ENCODE measurements at regions of chr1 and their contacts with region 1.

Region 1: GRCh38 chr1:208024406-208024805 is 113.5 kb upstream of the CD34 start:
- DNase-seq: no peak
- H3K4me3 ChIP-seq: no peak overlapping the region
- H3K27ac ChIP-seq: no peak overlapping the region
- H3K4me1 ChIP-seq: 0 out of 7 replicates have a peak, but pooled peaks cover 0 to 2% (median 0%) of the 10 kb centered on the region in 4 experiments
- H3K27me3 ChIP-seq: no peaks in the 10 kb centered on the region
- CTCF ChIP-seq: no peak
- EP300 ChIP-seq: no peak
- POLR2A ChIP-seq: no peak
- RAD21 ChIP-seq: no peak

Region 2: GRCh38 chr1:208047476-208047934 is 23.1 kb after region 1 on chr1:
- CTCF ChIA-PET with region 1: interaction called, 78 read pairs
- POLR2A ChIA-PET with region 1: no interaction called
- DNase-seq: no peak
- H3K4me3 ChIP-seq: no peak overlapping the region
- H3K27ac ChIP-seq: no peak overlapping the region
- H3K4me1 ChIP-seq: peaks cover 0 to 5% (median 0%) of the 10 kb centered on the region in 4 experiments; a peak in 1 of 7 replicates
- H3K27me3 ChIP-seq: no peaks in the 10 kb centered on the region
- CTCF ChIP-seq: no peak
- EP300 ChIP-seq: no peak
- POLR2A ChIP-seq: no peak
- RAD21 ChIP-seq: no peak

Region 3: DNA sequence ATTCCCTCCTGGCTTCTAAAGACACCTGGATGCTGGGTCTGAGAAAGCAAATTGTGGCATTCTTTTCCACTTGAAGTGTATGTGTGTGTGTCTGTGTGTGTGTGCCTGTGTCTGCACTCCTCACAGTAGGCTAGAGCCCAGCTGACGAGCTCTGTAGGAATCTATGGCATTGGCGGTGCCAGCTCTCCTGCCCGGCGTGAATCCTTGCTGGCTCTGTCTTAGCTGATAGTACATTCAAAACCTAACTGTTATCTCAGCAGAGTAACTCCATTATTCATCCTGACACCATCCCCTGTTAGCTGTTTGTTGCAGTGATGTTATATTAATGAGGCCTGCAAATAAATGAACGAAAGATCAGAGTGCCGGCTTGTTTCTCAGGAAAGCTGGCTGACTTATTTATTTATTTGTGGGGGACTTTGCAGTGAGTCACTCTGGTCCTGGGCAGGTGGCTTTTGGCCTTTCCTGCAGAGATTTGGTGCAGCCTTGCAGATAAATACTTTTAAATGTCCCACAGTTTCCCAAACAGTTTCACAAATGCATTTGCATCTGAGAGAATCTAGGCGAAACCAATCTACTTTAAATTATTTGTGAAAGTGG is 47.1 kb after region 1 on chr1:
- CTCF ChIA-PET with region 1: interaction called, 48 read pairs
- POLR2A ChIA-PET with region 1: no interaction called
- DNase-seq: no peak
- H3K4me3 ChIP-seq: no peak overlapping the region
- H3K27ac ChIP-seq: no peak overlapping the region
- H3K4me1 ChIP-seq: no peaks in the 10 kb centered on the region; a peak in 1 of 7 replicates
- H3K27me3 ChIP-seq: no peaks in the 10 kb centered on the region
- CTCF ChIP-seq: no peak
- EP300 ChIP-seq: no peak
- POLR2A ChIP-seq: no peak
- RAD21 ChIP-seq: no peak

Region 4: GRCh38 chr1:208332774-208333126 is 308.3 kb after region 1 on chr1:
- CTCF ChIA-PET with region 1: no interaction called
- POLR2A ChIA-PET with region 1: no interaction called
- DNase-seq: no peak
- H3K4me3 ChIP-seq: no peak overlapping the region
- H3K27ac ChIP-seq: no peak overlapping the region
- H3K4me1 ChIP-seq: peaks cover 0 to 5% (median 0%) of the 10 kb centered on the region in 4 experiments; a peak in 1 of 7 replicates
- H3K27me3 ChIP-seq: peaks cover 0 to 5% (median 1%) of the 10 kb centered on the region in 4 experiments; a peak in 3 of 7 replicates
- CTCF ChIP-seq: no peak
- EP300 ChIP-seq: no peak
- POLR2A ChIP-seq: no peak
- RAD21 ChIP-seq: no peak